PC-9 (cell line): ENCODE measurements at regions of chrX and their contacts with region 1.

Region 1: GRCh38 chrX:33160273-33160672 is 51.1 kb downstream of the DMD start:
- DNase-seq: no peak
- H3K4me3 ChIP-seq: no peak overlapping the region
- H3K27ac ChIP-seq: no peak overlapping the region
- H3K4me1 ChIP-seq: no peaks in the 10 kb centered on the region
- H3K27me3 ChIP-seq: no peaks in the 10 kb centered on the region
- CTCF ChIP-seq: no peak

Region 2: GRCh38 chrX:33589316-33589715 is 429.0 kb after region 1 on chrX:
- CTCF ChIA-PET with region 1: no interaction called
- POLR2A ChIA-PET with region 1: no interaction called
- intact Hi-C with region 1: no loop called
- DNase-seq: no peak
- H3K4me3 ChIP-seq: no peak overlapping the region
- H3K27ac ChIP-seq: no peak overlapping the region
- H3K4me1 ChIP-seq: no peaks in the 10 kb centered on the region
- H3K27me3 ChIP-seq: no peaks in the 10 kb centered on the region
- CTCF ChIP-seq: no peak

Region 3: GRCh38 chrX:33949300-33949699 is 789.0 kb after region 1 on chrX:
- CTCF ChIA-PET with region 1: no interaction called
- POLR2A ChIA-PET with region 1: no interaction called
- intact Hi-C with region 1: loop called (anchors 10 kb)
- DNase-seq: no peak
- H3K4me3 ChIP-seq: no peak overlapping the region
- H3K27ac ChIP-seq: no peak overlapping the region
- H3K4me1 ChIP-seq: no peaks in the 10 kb centered on the region
- H3K27me3 ChIP-seq: no peaks in the 10 kb centered on the region
- CTCF ChIP-seq: no peak